CD8-positive, alpha-beta T cell (primary cell): ENCODE measurements at regions of chr11 and their contacts with region 1.

Region 1: DNA sequence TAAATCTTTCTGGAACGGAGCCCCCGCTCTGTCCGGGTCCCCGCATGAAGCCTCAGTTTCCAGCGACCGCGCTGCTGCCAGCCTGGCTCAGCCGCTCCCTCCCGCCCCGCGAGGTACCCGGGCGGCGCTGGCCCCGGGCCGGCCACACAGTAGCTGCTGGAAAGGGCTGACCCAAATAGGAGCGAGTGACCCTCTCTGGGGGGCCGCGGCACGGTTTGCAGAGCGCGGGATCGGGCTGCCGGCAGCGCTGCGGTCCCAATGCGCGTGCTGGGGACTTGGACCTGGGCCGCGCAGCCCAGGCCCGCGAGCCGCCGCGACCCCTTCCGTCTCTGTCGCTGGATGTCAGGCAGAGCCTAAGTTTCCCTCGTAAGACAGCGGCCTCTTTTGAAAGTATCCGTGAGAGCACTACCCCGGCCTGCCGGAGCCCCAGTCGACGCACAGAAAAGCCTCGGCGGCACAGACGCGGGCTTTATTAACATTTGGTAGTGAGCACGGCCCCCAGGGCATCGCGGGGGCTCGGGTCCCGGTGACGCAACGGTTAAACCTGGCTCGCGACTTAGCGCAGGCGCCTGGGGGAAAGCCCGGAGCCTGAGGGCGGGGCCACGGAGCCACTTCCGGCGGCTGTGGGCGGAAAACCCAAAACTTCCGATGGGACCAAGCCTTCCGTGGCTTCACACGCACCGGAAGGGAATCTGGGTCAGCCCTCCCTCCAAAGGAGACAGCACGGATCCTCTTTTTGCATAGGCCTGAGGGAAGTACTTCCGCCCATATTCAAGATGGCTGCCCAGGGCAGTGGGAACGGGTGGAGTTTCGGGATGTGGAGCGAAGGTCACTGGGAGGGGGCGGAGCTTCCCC is 14.9 kb downstream of the BAD start:
- DNase-seq: peak; percentile 94 to 99 (median 97)
- ATAC-seq: peak; percentile 64
- H3K4me3 ChIP-seq: peak overlapping the region; percentile 79 to 81
- H3K4me3 Mint-ChIP-seq: peak overlapping the region; percentile 95
- H3K27ac ChIP-seq: peak overlapping the region; percentile 69 to 99
- H3K27ac Mint-ChIP-seq: peak overlapping the region; percentile 94
- H3K4me1 ChIP-seq: peaks cover 24% of the 10 kb centered on the region
- H3K4me1 Mint-ChIP-seq: peaks cover 27% of the 10 kb centered on the region
- H3K27me3 ChIP-seq: no peaks in the 10 kb centered on the region
- H3K27me3 Mint-ChIP-seq: no peaks in the 10 kb centered on the region
- CTCF ChIP-seq: peak; percentile 40

Region 2: GRCh38 chr11:64225612-64226506 is 43.7 kb before region 1 on chr11 and contains the starts of genes NUDT22 and TRPT1:
- CTCF ChIA-PET with region 1: interaction called, 4 read pairs
- POLR2A ChIA-PET with region 1: interaction called, 4 read pairs
- intact Hi-C with region 1: loop called in 1 of 2 experiments (anchors 1 kb)
- DNase-seq: peak; percentile 75 to 96 (median 93)
- ATAC-seq: peak; percentile 65
- H3K4me3 ChIP-seq: peak within 1 kb of the TSS; percentile 76 to 100
- H3K4me3 Mint-ChIP-seq: peak within 1 kb of the TSS; percentile 93
- H3K27ac ChIP-seq: peak within 1 kb of the TSS; percentile 85 to 88
- H3K27ac Mint-ChIP-seq: peak within 1 kb of the TSS; percentile 91
- H3K4me1 ChIP-seq: peaks cover 41% of the 10 kb centered on the region
- H3K4me1 Mint-ChIP-seq: peaks cover 30% of the 10 kb centered on the region
- H3K27me3 ChIP-seq: no peaks in the 10 kb centered on the region
- H3K27me3 Mint-ChIP-seq: no peaks in the 10 kb centered on the region
- CTCF ChIP-seq: peak; percentile 58
- total RNA-seq, gene NUDT22: 20.1 to 23.6 TPM
- total RNA-seq, gene TRPT1: 12.3 to 14.3 TPM

Region 3: GRCh38 chr11:64240394-64241174 is 29.0 kb before region 1 on chr11 and contains the start of gene FKBP2:
- CTCF ChIA-PET with region 1: interaction called, 3 read pairs
- POLR2A ChIA-PET with region 1: interaction called, 20 read pairs
- intact Hi-C with region 1: loop called (anchors 1 kb)
- DNase-seq: peak; percentile 94 to 100 (median 97)
- ATAC-seq: peak; percentile 63
- H3K4me3 ChIP-seq: peak within 1 kb of the TSS; percentile 80 to 97
- H3K4me3 Mint-ChIP-seq: peak within 1 kb of the TSS; percentile 90
- H3K27ac ChIP-seq: peak within 1 kb of the TSS; percentile 94 to 99
- H3K27ac Mint-ChIP-seq: peak within 1 kb of the TSS; percentile 100
- H3K4me1 ChIP-seq: peaks cover 29% of the 10 kb centered on the region
- H3K4me1 Mint-ChIP-seq: peaks cover 34% of the 10 kb centered on the region
- H3K27me3 ChIP-seq: no peaks in the 10 kb centered on the region
- H3K27me3 Mint-ChIP-seq: no peaks in the 10 kb centered on the region
- CTCF ChIP-seq: no peak
- total RNA-seq, gene FKBP2: 19.4 TPM

Region 4: GRCh38 chr11:64246871-64247728 is 22.5 kb before region 1 on chr11 and contains the start of gene PPP1R14B:
- CTCF ChIA-PET with region 1: interaction called, 50 read pairs
- POLR2A ChIA-PET with region 1: interaction called, 20 read pairs
- intact Hi-C with region 1: loop called (anchors 1 kb)
- DNase-seq: peak; percentile 48 to 83 (median 81)
- ATAC-seq: peak; percentile 58
- H3K4me3 ChIP-seq: peak within 1 kb of the TSS; percentile 75 to 98
- H3K4me3 Mint-ChIP-seq: peak within 1 kb of the TSS; percentile 85
- H3K27ac ChIP-seq: peak within 1 kb of the TSS; percentile 35 to 42
- H3K27ac Mint-ChIP-seq: peak within 1 kb of the TSS; percentile 82
- H3K4me1 ChIP-seq: peaks cover 41% of the 10 kb centered on the region
- H3K4me1 Mint-ChIP-seq: peaks cover 44% of the 10 kb centered on the region
- H3K27me3 ChIP-seq: no peaks in the 10 kb centered on the region
- H3K27me3 Mint-ChIP-seq: no peaks in the 10 kb centered on the region
- CTCF ChIP-seq: no peak
- total RNA-seq, gene PPP1R14B: 25.7 to 30.8 TPM

Region 5: GRCh38 chr11:64284048-64284961 is 14.7 kb after region 1 on chr11 and contains the start of gene BAD:
- CTCF ChIA-PET with region 1: interaction called, 26 read pairs
- POLR2A ChIA-PET with region 1: interaction called, 71 read pairs
- intact Hi-C with region 1: loop called (anchors 1 kb)
- DNase-seq: peak; percentile 85 to 95 (median 92)
- ATAC-seq: peak; percentile 77
- H3K4me3 ChIP-seq: peak within 1 kb of the TSS; percentile 73 to 77
- H3K4me3 Mint-ChIP-seq: peak within 1 kb of the TSS; percentile 88
- H3K27ac ChIP-seq: peak within 1 kb of the TSS; percentile 95 to 100
- H3K27ac Mint-ChIP-seq: peak within 1 kb of the TSS; percentile 97
- H3K4me1 ChIP-seq: peaks cover 18% of the 10 kb centered on the region
- H3K4me1 Mint-ChIP-seq: peaks cover 16% of the 10 kb centered on the region
- H3K27me3 ChIP-seq: no peaks in the 10 kb centered on the region
- H3K27me3 Mint-ChIP-seq: no peaks in the 10 kb centered on the region
- CTCF ChIP-seq: no peak
- total RNA-seq, gene BAD: 14.6 to 18.2 TPM

Region 6: GRCh38 chr11:64341851-64342791 is 72.5 kb after region 1 on chr11:
- CTCF ChIA-PET with region 1: no interaction called
- POLR2A ChIA-PET with region 1: no interaction called
- intact Hi-C with region 1: loop called in 1 of 2 experiments (anchors 1 kb)
- DNase-seq: peak; percentile 75 to 90 (median 88)
- ATAC-seq: peak; percentile 63
- H3K4me3 ChIP-seq: no peak overlapping the region
- H3K4me3 Mint-ChIP-seq: peak overlapping the region; percentile 84
- H3K27ac ChIP-seq: peak overlapping the region in 1 of 2 experiments; percentile 86
- H3K27ac Mint-ChIP-seq: no peak overlapping the region
- H3K4me1 ChIP-seq: peaks cover 34% of the 10 kb centered on the region
- H3K4me1 Mint-ChIP-seq: peaks cover 41% of the 10 kb centered on the region
- H3K27me3 ChIP-seq: no peaks in the 10 kb centered on the region
- H3K27me3 Mint-ChIP-seq: no peaks in the 10 kb centered on the region
- CTCF ChIP-seq: peak; percentile 36